ENCODE measurements at regions of chr3 and their contacts with region 1.

Region 1: GRCh38 chr3:57100046-57100695 is 39.7 kb downstream of the SPATA12 start:
- DNase-seq: peak; percentile 84
- H3K4me3 Mint-ChIP-seq: no peak overlapping the region
- H3K27ac Mint-ChIP-seq: no peak overlapping the region
- H3K4me1 Mint-ChIP-seq: no peaks in the 10 kb centered on the region
- H3K27me3 Mint-ChIP-seq: no peaks in the 10 kb centered on the region

Region 2: DNA sequence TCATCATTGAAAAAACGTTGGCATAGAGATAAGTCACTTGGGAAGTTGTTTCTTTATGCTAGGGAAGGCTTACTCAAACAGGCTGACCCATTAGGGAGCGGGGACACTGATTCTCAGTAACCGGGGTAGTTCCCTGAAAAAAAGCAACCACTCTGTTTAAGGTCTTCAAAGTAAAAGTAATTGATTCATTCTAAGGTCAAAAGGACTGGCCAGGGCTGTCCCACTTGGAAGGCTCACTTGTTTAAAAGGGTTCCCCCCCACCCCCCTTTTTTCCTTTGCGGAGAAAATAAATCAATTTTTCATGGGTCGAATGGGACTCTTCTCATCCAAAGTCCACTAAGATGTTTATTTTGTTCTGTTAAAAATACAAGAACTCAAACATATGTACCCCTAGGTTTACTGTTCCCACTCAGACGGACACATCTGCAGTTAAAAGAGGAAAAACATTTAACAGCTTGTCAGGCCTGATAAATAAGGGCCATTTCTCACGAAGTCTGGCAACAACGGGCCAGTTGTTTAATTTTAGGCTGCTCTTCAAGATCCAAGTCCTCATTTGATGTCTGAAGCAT is 351.4 kb before region 1 on chr3:
- CTCF ChIA-PET with region 1: no interaction called
- intact Hi-C with region 1: no loop called
- DNase-seq: no peak
- H3K4me3 Mint-ChIP-seq: no peak overlapping the region
- H3K27ac Mint-ChIP-seq: no peak overlapping the region
- H3K4me1 Mint-ChIP-seq: peaks cover 34% of the 10 kb centered on the region
- H3K27me3 Mint-ChIP-seq: no peaks in the 10 kb centered on the region

Region 3: DNA sequence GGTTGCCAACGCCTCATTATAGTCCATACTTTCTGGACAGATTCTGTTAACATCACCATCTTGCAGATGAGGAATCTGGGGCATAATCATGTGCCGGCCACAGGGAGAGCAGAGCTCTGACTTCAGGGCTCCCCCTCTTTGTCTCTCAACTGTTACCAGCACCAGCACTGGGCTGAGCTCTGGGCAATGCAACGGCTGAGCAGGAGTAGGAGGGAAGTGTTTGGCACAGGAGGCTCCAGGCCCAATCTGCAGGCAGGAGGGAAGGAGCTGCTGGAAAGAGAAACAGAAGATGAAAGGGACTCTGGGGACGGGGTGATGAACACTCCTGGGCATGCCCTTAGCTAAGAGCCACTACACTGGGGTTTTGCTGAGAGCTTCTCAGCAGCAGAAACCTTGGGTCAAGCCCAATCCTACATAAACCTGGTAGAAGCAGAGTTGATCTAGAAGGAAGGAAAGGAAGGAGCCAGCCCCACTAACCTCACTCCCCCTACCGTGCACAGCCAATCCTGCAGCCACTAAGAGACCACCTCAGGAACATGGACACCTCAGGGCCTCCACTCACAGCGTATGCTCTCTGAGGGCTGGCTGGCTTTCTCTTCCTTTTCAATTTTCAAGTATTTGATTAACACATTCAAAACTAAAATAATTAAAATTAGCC is 112.8 kb before region 1 on chr3:
- CTCF ChIA-PET with region 1: no interaction called
- intact Hi-C with region 1: no loop called
- DNase-seq: peak; percentile 37
- H3K4me3 Mint-ChIP-seq: no peak overlapping the region
- H3K27ac Mint-ChIP-seq: no peak overlapping the region
- H3K4me1 Mint-ChIP-seq: peaks cover 16% of the 10 kb centered on the region
- H3K27me3 Mint-ChIP-seq: peaks cover 5% of the 10 kb centered on the region

Region 4: GRCh38 chr3:56997675-56998074 is 102.5 kb before region 1 on chr3:
- CTCF ChIA-PET with region 1: no interaction called
- intact Hi-C with region 1: loop called (anchors 5 kb)
- DNase-seq: no peak
- H3K4me3 Mint-ChIP-seq: no peak overlapping the region
- H3K27ac Mint-ChIP-seq: no peak overlapping the region
- H3K4me1 Mint-ChIP-seq: peaks cover 3% of the 10 kb centered on the region
- H3K27me3 Mint-ChIP-seq: no peaks in the 10 kb centered on the region

Region 5: GRCh38 chr3:57163751-57164150 is 63.6 kb after region 1 on chr3:
- CTCF ChIA-PET with region 1: interaction called, 3 read pairs
- intact Hi-C with region 1: loop called (anchors 2 kb)
- DNase-seq: no peak
- H3K4me3 Mint-ChIP-seq: peak overlapping the region; percentile 75
- H3K27ac Mint-ChIP-seq: no peak overlapping the region
- H3K4me1 Mint-ChIP-seq: peaks cover 13% of the 10 kb centered on the region
- H3K27me3 Mint-ChIP-seq: peaks cover 62% of the 10 kb centered on the region

Region 6: GRCh38 chr3:57169872-57170623 is 69.9 kb after region 1 on chr3:
- CTCF ChIA-PET with region 1: interaction called, 9 read pairs
- intact Hi-C with region 1: loop called (anchors 1 kb)
- DNase-seq: peak; percentile 77
- H3K4me3 Mint-ChIP-seq: peak overlapping the region; percentile 60
- H3K27ac Mint-ChIP-seq: no peak overlapping the region
- H3K4me1 Mint-ChIP-seq: peaks cover 2% of the 10 kb centered on the region
- H3K27me3 Mint-ChIP-seq: peaks cover 49% of the 10 kb centered on the region

Region 7: GRCh38 chr3:57409456-57409855 is 309.3 kb after region 1 on chr3:
- CTCF ChIA-PET with region 1: no interaction called
- intact Hi-C with region 1: loop called (anchors 10 kb)
- DNase-seq: no peak
- H3K4me3 Mint-ChIP-seq: no peak overlapping the region
- H3K27ac Mint-ChIP-seq: no peak overlapping the region
- H3K4me1 Mint-ChIP-seq: no peaks in the 10 kb centered on the region
- H3K27me3 Mint-ChIP-seq: peaks cover 5% of the 10 kb centered on the region

Region 8: GRCh38 chr3:57852896-57853295 is 752.7 kb after region 1 on chr3:
- CTCF ChIA-PET with region 1: no interaction called
- intact Hi-C with region 1: loop called (anchors 10 kb)
- DNase-seq: no peak
- H3K4me3 Mint-ChIP-seq: no peak overlapping the region
- H3K27ac Mint-ChIP-seq: no peak overlapping the region
- H3K4me1 Mint-ChIP-seq: no peaks in the 10 kb centered on the region
- H3K27me3 Mint-ChIP-seq: no peaks in the 10 kb centered on the region

Measured in activated naive CD4-positive, alpha-beta T cell treated with anti-CD3 and anti-CD28 coated beads for 36 hours (primary cell).